ENCODE measurements at regions of chr17 and their contacts with region 1.

Region 1: DNA sequence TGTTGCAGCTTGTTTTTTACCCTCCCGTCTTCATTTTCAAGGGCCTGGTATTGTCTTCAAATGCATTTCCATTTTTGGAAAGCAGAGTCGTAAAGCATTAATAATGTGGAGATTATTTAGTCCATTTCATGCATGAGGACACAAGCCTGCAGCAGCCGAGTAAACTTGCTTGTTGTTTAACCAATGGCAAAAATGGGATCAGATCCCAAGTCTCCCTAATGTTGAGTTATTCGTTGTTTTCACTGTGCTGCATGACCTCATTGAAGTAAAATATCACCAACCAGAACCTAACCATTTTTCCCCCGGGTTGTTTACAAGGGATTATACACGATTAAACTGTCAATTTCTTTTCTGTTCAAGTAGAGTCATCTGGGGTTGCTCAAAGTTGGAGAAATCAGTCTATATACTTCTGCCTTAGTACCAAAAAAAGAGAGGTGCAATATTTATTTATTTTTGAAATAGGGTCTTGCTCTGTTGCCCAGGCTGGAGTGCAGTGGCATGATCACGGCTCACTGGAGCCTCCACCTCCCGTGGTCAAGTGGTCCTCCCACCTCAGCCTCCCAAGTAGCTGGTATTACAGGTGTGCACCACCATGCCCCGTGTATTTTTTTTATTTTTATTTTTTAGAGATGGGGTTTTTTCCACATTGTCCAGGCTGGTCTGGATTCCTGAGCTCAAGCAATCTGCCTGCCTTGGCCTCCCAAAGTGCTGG is 12.4 kb downstream of the AMZ2 start:
- DNase-seq: no peak
- H3K4me3 ChIP-seq: no peak overlapping the region
- H3K27ac ChIP-seq: no peak overlapping the region
- H3K4me1 ChIP-seq: peaks cover 0 to 12% of the 10 kb centered on the region in 2 donors
- H3K27me3 ChIP-seq: no peaks in the 10 kb centered on the region
- CTCF ChIP-seq: no peak
- POLR2A ChIP-seq: no peak

Region 2: DNA sequence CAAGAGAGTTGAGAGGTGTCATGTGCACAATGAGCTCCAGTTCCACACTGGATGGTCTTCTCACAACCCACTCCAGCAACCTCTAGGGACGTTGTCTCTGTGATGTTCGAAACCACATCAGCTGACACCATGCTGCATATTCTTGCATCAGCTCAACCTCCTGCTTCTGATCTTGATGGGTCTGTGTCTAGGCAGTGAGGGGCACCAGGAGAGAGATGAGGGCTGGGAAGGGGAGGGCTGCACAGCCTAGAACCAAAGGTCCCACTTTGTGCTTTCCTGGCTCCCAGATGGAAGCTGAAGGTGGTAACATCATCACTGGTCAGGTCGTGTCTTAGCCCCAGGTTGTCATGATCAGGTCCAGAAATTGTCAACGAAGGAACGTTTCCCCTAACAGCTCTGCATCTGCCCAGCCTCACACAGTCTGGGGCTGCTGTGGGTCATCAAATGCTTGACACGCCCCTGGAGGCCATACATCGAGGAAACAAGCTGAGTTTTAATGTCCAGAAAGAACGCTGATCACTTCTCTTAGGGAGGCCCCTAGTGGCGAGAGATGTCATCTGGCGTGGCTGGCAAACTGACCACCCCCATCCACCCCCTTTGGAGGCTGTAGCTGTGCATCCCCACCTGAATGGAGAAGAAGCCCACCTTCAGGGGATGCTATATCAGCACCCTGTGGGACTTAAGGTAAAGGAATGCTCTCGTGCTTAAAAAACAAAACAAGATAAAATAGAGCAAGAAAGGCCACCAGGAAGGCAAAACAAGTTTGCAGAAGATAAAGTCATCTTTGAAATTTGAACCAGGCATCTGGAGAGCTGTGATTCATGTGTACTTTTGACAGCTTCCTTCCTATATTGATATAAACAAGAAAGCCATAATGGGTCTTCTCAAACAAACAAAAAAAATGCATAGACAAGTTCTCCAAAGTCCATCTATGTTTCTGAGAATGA is 138.8 kb after region 1 on chr17:
- intact Hi-C with region 1: loop called (anchors 5 kb)
- DNase-seq: peak; percentile 50 to 77 (median 64)
- H3K4me3 ChIP-seq: no peak overlapping the region
- H3K27ac ChIP-seq: peak overlapping the region in 1 of 5 donors; percentile 24
- H3K4me1 ChIP-seq: peaks cover 0 to 18% of the 10 kb centered on the region in 2 donors
- H3K27me3 ChIP-seq: no peaks in the 10 kb centered on the region
- CTCF ChIP-seq: peak; percentile 54 to 90 (median 74)
- POLR2A ChIP-seq: no peak

Region 3: DNA sequence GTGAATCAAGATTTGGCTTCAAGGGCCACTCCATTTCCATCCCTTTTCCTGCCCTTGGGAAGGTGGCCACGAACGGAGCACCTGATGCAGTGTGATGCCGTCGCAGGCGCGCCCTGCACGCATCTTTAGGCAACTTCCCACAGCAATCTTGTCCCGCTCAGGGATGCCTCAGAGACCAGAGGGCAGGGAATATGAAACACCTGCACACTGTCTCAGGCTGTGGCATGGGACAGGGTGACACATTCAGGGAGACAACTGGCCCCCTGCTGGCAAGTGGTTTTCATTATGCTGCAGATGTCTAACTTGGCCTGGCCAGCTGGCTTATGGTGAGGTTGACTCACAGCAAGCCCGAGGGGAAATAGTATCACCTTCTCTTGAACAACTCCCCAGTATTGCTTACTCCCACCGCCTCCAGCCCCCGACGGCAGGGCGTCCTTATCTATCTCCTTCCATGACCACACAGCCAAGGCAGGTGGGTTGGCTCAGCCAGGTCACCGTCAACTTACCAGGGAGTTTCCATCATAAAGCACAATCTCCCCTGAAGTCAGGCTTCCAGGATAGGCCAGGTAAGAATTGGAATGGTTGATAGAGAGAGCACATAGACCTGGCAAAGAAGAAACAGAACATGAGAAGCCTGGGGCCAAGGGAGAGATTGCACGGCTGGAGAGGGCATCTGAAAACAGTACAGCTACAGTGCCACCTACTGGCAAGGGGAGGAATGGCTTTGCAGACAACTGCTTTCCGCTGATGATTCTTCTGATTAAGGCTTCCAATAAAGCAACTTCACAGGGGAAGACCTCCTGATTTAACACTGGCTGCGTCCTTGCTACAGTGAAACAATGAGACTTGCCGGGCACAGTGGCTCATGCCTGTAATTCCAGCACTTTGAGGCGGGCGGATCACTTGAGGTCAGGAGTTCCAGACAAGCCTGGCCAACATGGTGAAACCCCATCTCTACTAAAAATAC is 176.0 kb after region 1 on chr17:
- intact Hi-C with region 1: loop called in 1 of 2 experiments (anchors 10 kb)
- DNase-seq: peak; percentile 75 to 94 (median 87)
- H3K4me3 ChIP-seq: no peak overlapping the region
- H3K27ac ChIP-seq: no peak overlapping the region
- H3K4me1 ChIP-seq: peaks cover 0 to 12% of the 10 kb centered on the region in 2 donors
- H3K27me3 ChIP-seq: no peaks in the 10 kb centered on the region
- CTCF ChIP-seq: peak; percentile 77 to 95 (median 92)
- POLR2A ChIP-seq: no peak

Measured in adrenal gland (tissue), 19 donors.